Posterior vena cava (tissue), 2 donors: ENCODE measurements at regions of chr5 and their contacts with region 1.

Region 1: DNA sequence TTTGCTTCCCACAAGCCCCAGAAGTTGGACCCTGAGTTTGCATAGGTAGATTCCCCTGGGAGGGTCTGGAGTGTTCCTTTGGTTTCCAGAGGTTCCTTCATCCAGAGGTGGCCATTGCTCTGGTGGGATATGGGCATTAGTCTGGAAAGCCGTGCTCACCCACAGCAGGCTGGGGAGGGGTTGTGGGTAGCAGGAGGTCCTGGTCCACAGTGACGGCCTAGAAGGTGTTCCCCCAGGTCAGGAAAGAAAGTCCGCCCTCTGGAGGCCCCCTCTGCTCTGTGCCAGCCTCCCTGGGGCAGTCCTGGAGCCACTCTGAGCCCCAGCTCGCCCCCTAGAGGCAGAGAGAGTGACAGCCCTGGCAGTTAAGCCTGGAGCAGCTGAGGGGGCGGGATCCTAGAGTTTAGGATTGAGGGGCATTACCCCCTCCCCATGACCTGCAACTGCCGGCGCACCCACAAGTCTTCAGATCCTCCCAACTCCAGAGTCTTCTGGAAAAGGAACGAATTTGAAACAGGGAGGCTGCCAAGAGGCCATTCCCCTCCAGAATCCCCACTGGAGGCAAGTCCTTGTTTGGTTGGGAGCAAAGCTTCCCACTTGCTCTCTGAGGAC is 36.8 kb downstream of the NDST1 start:
- DNase-seq: peak; percentile 91

Region 2: GRCh38 chr5:150458819-150459557 is 85.7 kb before region 1 on chr5:
- intact Hi-C with region 1: loop called (anchors 5 kb)
- DNase-seq: peak; percentile 92